ENCODE measurements at regions of chr5 and their contacts with region 1.

Region 1: GRCh38 chr5:80083101-80083890 is 48.1 kb downstream of the THBS4 start:
- DNase-seq: peak in 1 of 2 experiments; percentile 77
- H3K4me3 ChIP-seq: no peak overlapping the region
- H3K27ac ChIP-seq: no peak overlapping the region
- H3K4me1 ChIP-seq: no peaks in the 10 kb centered on the region; a peak in 1 of 7 replicates
- H3K27me3 ChIP-seq: no peaks in the 10 kb centered on the region
- CTCF ChIP-seq: peak in 2 of 3 experiments; percentile 51 to 63; a peak in 2 of 4 replicates
- EP300 ChIP-seq: no peak
- POLR2A ChIP-seq: no peak
- RAD21 ChIP-seq: peak; percentile 75 to 77

Region 2: GRCh38 chr5:79924936-79925893 is 158.1 kb before region 1 on chr5:
- CTCF ChIA-PET with region 1: interaction called, 27 read pairs
- POLR2A ChIA-PET with region 1: no interaction called
- DNase-seq: peak in 1 of 2 experiments; percentile 13
- H3K4me3 ChIP-seq: no peak overlapping the region
- H3K27ac ChIP-seq: no peak overlapping the region
- H3K4me1 ChIP-seq: no peaks in the 10 kb centered on the region
- H3K27me3 ChIP-seq: no peaks in the 10 kb centered on the region; a peak in 1 of 7 replicates
- CTCF ChIP-seq: peak; percentile 64 to 80 (median 72)
- EP300 ChIP-seq: no peak
- POLR2A ChIP-seq: no peak
- RAD21 ChIP-seq: peak; percentile 78 to 85

Region 3: DNA sequence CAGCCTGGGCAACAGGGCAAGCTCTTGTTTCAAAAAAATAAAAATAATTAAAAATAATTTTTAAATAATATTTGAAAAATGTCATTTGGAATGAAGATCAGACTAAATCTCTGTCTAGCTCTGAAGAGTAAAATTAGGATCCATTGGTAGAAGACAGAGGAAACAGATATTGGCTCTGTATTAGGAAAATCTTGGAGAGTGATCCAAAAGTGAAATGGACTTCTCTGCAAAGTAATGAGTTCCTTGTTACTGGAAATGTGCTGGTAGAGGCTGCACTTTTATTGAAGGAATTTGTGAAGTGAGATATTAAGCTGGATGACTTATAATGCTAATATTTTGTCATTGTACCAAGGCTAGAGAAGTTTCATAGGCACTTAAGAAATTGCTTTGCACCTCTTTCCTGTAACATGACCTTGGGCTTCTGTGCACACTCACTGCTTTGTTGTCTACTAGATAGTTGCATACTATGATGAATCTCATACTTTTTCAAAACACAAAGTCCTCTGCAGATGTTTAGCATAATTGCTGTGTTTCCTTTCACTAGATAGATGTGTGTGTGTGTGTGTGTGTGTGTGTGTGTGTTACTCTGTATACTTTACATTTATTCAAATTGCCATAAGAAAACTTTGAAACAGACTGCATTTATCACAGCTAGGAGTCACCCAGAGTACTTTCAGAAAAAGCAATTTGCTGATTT is 35.1 kb before region 1 on chr5:
- CTCF ChIA-PET with region 1: interaction called, 34 read pairs
- POLR2A ChIA-PET with region 1: no interaction called
- DNase-seq: no peak
- H3K4me3 ChIP-seq: no peak overlapping the region
- H3K27ac ChIP-seq: no peak overlapping the region
- H3K4me1 ChIP-seq: no peaks in the 10 kb centered on the region
- H3K27me3 ChIP-seq: no peaks in the 10 kb centered on the region
- CTCF ChIP-seq: no peak
- EP300 ChIP-seq: no peak
- POLR2A ChIP-seq: no peak
- RAD21 ChIP-seq: no peak

Region 4: DNA sequence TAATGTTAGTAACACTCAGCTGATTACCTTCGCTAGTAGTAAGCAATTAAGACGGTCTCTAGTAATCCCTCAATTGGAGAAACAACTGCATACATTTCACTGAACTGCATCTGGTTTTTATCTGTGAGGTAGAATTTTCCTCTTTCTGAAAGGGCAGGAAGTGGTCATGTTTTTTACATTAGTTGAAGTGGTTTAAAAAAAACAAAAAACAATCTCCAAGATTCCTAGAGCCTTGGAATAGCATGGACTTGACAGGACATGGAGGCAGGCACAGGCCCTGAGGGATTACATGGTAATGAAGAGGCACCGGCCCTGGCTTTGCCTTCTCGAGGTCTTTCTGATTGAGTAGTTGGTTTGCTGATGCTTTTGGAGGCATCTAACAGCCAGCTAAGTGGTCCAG is 22.3 kb before region 1 on chr5:
- CTCF ChIA-PET with region 1: interaction called, 14 read pairs
- POLR2A ChIA-PET with region 1: no interaction called
- DNase-seq: no peak
- H3K4me3 ChIP-seq: no peak overlapping the region
- H3K27ac ChIP-seq: no peak overlapping the region
- H3K4me1 ChIP-seq: no peaks in the 10 kb centered on the region; a peak in 2 of 7 replicates
- H3K27me3 ChIP-seq: no peaks in the 10 kb centered on the region
- CTCF ChIP-seq: no peak
- EP300 ChIP-seq: no peak
- POLR2A ChIP-seq: no peak
- RAD21 ChIP-seq: no peak

Region 5: GRCh38 chr5:80308526-80308925 is 225.2 kb after region 1 on chr5:
- CTCF ChIA-PET with region 1: interaction called, 118 read pairs
- POLR2A ChIA-PET with region 1: interaction called, 3 read pairs
- DNase-seq: peak in 1 of 2 experiments; percentile 42
- H3K4me3 ChIP-seq: no peak overlapping the region
- H3K27ac ChIP-seq: no peak overlapping the region
- H3K4me1 ChIP-seq: no peaks in the 10 kb centered on the region
- H3K27me3 ChIP-seq: no peaks in the 10 kb centered on the region
- CTCF ChIP-seq: no peak
- EP300 ChIP-seq: no peak
- POLR2A ChIP-seq: no peak
- RAD21 ChIP-seq: no peak

Region 6: DNA sequence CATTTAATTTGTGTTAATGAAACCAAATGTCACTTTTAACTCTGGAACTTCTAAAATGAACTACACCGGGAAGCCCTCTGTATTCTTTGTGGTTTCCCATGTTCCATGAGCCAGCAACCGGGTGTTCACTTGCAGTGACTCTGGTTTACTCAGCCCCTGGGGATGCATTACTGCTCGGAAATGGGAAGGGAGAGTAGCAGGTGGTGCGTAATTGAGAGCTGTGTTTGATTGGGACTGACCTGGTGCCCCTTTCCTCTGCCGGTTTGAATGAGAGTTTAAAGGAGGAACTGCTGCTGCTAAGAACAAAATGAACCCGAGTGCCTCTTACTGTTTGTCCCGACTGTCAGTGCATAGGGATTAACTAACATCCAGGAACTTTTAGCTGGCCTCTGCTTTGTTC is 671.6 kb after region 1 on chr5:
- CTCF ChIA-PET with region 1: no interaction called
- POLR2A ChIA-PET with region 1: no interaction called
- DNase-seq: no peak
- H3K4me3 ChIP-seq: no peak overlapping the region
- H3K27ac ChIP-seq: no peak overlapping the region
- H3K4me1 ChIP-seq: peaks cover 0 to 11% (median 2%) of the 10 kb centered on the region in 4 experiments; a peak in 3 of 7 replicates
- H3K27me3 ChIP-seq: no peaks in the 10 kb centered on the region
- CTCF ChIP-seq: no peak
- EP300 ChIP-seq: no peak
- POLR2A ChIP-seq: no peak
- RAD21 ChIP-seq: no peak